A549 (cell line): ENCODE measurements at regions of chr7 and their contacts with region 1.

Region 1: GRCh38 chr7:116671681-116672595 is at the start of gene MET:
- DNase-seq: peak; percentile 88 to 94
- ATAC-seq: peak; percentile 94 to 96
- H3K4me3 ChIP-seq: peak within 1 kb of the TSS; percentile 94
- H3K27ac ChIP-seq: peak within 1 kb of the TSS; percentile 95 to 98
- H3K4me1 ChIP-seq: peaks cover 35% of the 10 kb centered on the region
- CTCF ChIP-seq: peak; percentile 84
- EP300 ChIP-seq: peak in 1 of 2 experiments; percentile 50; a peak in 1 of 5 replicates
- POLR2A ChIP-seq: peak; percentile 58
- RAD21 ChIP-seq: peak; percentile 94 to 98
- polyA plus RNA-seq, gene MET: 161 and 165 TPM in 2 replicates

Region 2: DNA sequence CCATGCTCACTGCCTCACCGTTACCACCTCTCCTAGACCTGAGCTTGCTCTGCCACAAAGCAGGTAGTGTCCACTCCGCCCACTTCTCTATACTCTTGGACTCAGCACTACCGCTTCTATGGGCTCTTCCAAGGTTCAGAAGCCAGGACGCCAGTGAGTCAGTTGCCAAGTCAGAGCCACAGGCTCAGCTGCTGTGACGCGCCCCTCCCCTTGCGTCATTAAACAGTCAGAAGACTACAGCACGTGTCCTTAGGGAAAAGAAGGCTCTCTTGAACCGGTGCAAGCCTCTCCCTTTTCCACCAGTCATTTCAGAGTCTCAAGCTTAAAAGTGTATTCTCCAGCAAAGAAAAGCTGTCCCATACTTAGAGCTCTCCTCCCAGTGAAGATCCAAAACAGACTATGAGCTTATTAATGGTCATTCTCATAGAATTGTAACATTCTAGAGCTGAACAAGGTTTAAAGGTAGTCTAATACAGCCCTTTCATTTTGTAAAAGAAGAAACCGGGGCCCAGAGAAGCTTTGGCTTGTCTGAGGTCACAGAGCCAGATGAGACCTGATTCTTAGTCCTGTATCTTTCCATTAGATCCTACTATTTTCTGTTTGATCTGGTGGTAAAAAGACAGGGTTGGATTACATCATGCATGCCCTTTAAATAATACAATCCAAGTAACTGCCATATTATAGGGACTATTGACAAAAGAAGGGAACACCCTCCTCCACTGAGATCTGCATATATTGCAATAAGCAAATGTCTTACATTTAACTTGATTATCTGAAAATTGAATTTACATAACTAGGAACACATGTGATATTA is 40.8 kb before region 1 on chr7:
- CTCF ChIA-PET with region 1: interaction called, 12 read pairs
- POLR2A ChIA-PET with region 1: interaction called, 24 read pairs
- DNase-seq: peak; percentile 86 to 96
- ATAC-seq: peak; percentile 94 to 97
- H3K4me3 ChIP-seq: no peak overlapping the region
- H3K27ac ChIP-seq: peak overlapping the region; percentile 85 to 90
- H3K4me1 ChIP-seq: peaks cover 55% of the 10 kb centered on the region
- CTCF ChIP-seq: no peak
- EP300 ChIP-seq: no peak
- POLR2A ChIP-seq: no peak
- RAD21 ChIP-seq: no peak

Region 3: DNA sequence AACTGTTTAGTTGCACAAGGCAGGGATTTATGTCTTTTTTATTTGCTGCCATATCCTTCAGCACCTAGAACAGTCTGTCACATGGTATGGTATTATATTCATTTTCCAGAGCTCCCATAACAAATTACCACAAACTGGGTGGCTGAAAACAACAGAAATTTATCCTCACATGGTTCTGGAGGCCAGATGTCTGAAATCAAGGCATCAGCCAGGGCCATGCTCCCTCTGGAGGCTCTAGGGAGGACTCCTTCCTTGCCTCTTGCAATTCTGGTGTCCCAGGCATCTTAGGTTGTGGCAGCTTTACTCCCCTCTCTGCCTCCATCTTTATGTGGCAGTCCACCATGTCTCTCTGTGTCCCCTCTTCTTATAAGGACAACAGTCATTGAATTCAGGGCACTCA is 43.1 kb after region 1 on chr7:
- CTCF ChIA-PET with region 1: interaction called, 20 read pairs
- POLR2A ChIA-PET with region 1: interaction called, 15 read pairs
- DNase-seq: peak in 1 of 2 experiments; percentile 51
- ATAC-seq: peak in 1 of 2 experiments; percentile 15; a peak in 1 of 6 replicates
- H3K4me3 ChIP-seq: no peak overlapping the region
- H3K27ac ChIP-seq: peak overlapping the region; percentile 77 to 86
- H3K4me1 ChIP-seq: peaks cover 72% of the 10 kb centered on the region
- CTCF ChIP-seq: no peak
- EP300 ChIP-seq: no peak
- POLR2A ChIP-seq: no peak
- RAD21 ChIP-seq: peak in 1 of 2 experiments; percentile 21; a peak in 1 of 5 replicates

Region 4: GRCh38 chr7:116786791-116787443 is 115.0 kb after region 1 on chr7:
- CTCF ChIA-PET with region 1: interaction called, 16 read pairs
- POLR2A ChIA-PET with region 1: no interaction called
- DNase-seq: peak in 1 of 2 experiments; percentile 59
- ATAC-seq: peak; percentile 82
- H3K4me3 ChIP-seq: no peak overlapping the region
- H3K27ac ChIP-seq: no peak overlapping the region
- H3K4me1 ChIP-seq: peaks cover 23% of the 10 kb centered on the region
- CTCF ChIP-seq: peak; percentile 56
- EP300 ChIP-seq: no peak
- POLR2A ChIP-seq: no peak
- RAD21 ChIP-seq: peak; percentile 73 to 76

Region 5: DNA sequence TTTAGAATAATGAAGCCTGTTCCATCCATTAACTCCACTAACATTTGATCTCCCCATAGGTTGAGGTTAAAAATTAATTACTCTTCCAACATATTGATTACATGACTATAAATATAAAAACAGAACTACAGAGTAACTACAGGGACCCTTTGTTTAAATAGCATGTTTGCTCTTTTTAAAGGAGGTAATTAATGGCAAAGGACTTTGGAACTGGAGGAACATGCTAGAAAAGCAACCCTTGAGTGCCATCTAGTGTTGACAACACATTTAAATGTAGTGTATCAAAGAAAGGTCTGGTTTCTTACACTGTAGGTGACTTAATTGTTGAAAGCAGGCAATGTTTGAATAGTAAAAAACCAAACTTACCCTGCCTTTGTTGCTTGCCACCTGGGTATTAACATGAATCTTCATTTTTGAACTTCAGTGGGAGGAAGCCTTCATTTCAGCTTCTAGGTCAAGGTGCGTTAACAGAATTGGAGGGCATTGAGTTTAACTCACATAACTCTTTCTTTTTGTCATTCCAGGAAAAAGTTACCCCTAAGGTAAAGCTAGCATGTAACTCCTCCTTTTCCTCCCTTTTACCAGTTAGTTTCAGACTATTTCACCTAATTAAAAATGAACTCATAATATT is 137.8 kb after region 1 on chr7:
- CTCF ChIA-PET with region 1: interaction called, 30 read pairs
- POLR2A ChIA-PET with region 1: interaction called, 16 read pairs
- DNase-seq: peak in 1 of 2 experiments; percentile 79
- ATAC-seq: peak; percentile 84 to 86
- H3K4me3 ChIP-seq: no peak overlapping the region
- H3K27ac ChIP-seq: peak overlapping the region; percentile 67 to 68
- H3K4me1 ChIP-seq: peaks cover 77% of the 10 kb centered on the region
- CTCF ChIP-seq: peak; percentile 92
- EP300 ChIP-seq: no peak
- POLR2A ChIP-seq: no peak
- RAD21 ChIP-seq: peak; percentile 93 to 96